ENCODE measurements at regions of chr5 and their contacts with region 1.

Region 1: DNA sequence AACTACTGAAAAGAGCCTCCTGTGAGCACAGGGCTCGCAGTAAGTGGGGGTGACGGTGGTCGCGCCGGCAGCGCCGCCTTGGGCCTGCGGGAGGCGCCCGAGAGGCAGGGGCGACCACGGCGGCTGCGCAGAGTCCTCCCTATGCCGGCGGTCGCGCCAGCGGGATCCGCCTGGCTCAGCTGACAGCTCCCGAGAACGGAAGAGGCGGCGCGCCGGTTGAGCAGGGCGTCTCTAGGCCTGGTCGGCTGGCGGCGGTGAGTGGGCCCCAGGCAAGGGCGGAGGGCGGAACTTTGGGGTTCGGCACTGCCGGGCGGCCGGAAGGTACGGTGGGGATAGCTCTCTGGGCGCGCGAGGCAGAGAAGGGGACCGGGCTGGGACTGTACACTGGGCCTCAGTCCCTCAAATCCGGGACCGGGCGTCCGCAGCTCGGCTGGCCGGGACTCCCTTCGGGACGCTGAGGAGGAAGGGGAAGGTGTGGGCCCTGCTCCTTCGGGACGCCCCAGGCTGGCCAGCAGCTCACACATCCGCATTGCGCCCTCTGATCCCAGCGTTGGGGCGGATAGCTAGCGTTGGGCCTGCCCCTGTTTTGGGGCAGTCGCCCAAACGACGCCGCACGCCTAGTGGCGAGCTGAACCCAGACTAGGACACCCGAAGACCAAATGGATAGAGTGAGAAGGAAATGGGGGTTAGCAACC is at the start of gene RNF14:
- DNase-seq: peak; percentile 94
- CTCF ChIP-seq: peak; percentile 92

Region 2: DNA sequence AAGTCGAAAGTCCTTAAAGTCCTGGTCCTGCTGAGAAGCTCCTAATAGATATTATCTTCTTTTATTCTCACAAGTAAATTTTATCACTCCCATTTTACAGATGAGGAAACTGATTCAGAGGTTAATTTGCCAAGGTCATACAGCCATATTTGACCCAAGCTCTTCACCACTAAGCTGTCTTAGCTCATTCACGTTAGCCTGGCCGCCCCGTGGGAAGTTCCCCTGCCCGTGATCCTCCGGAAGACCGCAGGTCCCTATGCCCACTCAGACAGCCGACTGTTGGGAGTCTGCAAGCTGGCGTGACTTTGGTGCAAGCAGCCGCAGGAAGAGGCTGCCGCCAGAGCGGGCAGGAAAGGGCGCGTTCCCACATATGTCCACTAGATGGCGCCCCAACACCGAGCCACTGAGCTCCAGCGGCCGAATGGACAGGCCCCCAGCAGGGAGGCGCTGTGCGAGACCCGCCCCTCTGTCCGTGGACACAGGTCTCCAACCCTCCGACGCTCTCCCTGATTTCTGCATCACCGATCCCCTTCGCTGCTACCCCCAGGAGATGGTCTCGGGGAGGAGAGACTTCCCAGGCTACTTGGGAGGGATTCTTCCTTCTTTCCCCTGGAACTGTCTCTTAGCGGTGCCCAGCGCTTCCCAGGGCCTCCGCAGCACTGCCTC is 277.1 kb before region 1 on chr5:
- in situ Hi-C with region 1: loop called (anchors 25 kb)
- DNase-seq: peak; percentile 87
- CTCF ChIP-seq: peak; percentile 96

Region 3: DNA sequence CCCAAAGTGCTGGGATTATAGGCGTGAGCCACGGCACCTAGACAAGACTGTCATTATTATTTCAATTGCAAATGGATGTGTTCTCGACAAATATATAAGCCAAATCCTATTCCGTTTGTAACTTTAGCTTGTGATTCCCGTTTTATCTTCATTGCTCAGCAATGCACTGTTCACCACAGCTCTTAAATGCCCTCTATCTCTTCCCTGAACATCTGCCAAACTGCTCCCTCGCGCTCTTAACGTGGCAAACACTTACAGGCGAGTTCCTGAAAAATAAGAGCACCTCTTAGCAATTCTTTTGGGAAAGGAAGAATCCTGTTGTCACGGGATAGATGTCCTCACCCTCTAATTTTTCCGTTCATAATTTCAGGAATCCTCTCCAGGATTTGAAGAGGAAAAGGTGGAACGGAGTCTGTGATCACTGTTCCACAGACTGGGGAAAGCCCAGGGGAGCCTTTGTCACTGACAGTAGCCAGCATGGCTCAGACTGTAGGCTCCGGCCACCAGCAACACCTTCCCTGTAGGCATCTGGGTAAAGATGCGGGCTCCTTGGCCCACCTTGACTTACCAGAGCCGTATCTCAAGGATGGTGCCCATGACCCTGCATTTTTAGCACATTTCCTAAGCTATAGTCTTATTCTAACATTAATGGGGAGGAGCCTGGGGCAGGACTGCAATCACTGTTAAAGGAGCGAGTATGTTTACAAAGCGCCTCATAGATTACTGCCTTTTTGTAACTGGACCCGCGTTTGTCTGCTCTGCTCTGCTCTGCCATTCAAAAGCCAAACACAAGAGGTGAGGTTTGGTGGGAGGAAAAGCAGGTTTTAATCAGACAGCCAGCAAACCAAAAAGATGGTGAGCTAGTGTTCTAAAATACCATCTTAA is 63.9 kb after region 1 on chr5:
- in situ Hi-C with region 1: no loop called
- DNase-seq: no peak
- CTCF ChIP-seq: no peak

Region 4: GRCh38 chr5:142063878-142064331 is 94.8 kb after region 1 on chr5:
- in situ Hi-C with region 1: no loop called
- DNase-seq: no peak
- CTCF ChIP-seq: no peak